Naive thymus-derived CD4-positive, alpha-beta T cell (primary cell): ENCODE measurements at regions of chr5 and their contacts with region 1.

Region 1: DNA sequence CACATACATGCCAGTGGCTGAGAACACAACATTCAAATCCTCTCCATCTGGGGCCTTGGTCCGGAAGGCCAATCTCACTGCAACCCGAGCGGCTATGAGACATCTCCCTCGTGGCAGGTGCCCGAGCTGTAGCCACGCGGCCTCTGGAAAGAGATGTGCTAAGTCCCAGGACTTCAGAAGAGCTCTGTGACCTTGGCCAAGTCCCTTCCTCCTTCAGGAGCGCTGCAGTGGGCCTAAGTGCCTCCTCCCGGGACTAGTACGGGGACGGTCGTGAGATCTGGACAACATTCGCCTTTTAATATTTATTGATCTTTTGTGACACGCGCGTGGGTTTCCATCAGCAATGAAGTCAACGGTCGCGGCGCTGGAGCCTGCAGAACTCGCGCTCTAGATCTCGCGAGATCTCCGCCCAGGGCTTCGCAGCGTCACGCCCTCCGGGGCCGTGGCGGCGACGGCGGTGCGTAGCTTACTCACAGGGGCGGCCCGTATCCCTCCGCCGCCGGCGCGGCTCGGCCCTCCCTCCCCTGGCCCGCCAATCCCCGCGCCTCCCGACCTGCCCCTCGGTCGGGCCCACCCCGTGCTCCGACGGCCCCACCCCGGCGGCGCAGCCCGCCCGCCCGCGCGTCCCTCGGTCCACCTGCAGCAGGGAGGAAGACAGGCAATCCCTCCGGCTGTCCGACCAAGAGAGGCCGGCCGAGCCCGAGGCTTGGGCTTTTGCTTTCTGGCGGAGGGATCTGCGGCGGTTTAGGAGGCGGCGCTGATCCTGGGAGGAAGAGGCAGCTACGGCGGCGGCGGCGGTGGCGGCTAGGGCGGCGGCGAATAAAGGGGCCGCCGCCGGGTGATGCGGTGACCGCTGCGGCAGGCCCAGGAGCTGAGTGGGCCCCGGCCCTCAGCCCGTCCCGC is at the start of gene UBE2D2:
- DNase-seq: peak; percentile 95 to 98 (median 97)
- ATAC-seq: peak; percentile 94
- H3K4me3 ChIP-seq: peak within 1 kb of the TSS; percentile 85
- H3K4me3 Mint-ChIP-seq: peak within 1 kb of the TSS; percentile 90 to 100 (median 98)
- H3K27ac ChIP-seq: peak within 1 kb of the TSS; percentile 92
- H3K27ac Mint-ChIP-seq: peak within 1 kb of the TSS; percentile 88 to 98 (median 95)
- H3K4me1 ChIP-seq: peaks cover 26 to 36% of the 10 kb centered on the region in 2 donors
- H3K4me1 Mint-ChIP-seq: peaks cover 28 to 39% (median 34%) of the 10 kb centered on the region in 7 donors
- H3K27me3 ChIP-seq: no peaks in the 10 kb centered on the region
- H3K27me3 Mint-ChIP-seq: no peaks in the 10 kb centered on the region
- total RNA-seq, gene UBE2D2: 145 to 214 (median 184) TPM

Region 2: GRCh38 chr5:138035605-138036537 is 1525.1 kb before region 1 on chr5:
- CTCF ChIA-PET with region 1: no interaction called
- POLR2A ChIA-PET with region 1: no interaction called
- intact Hi-C with region 1: loop called in 1 of 2 experiments (anchors 10 kb)
- DNase-seq: peak; percentile 11 to 80 (median 72)
- ATAC-seq: peak; percentile 76
- H3K4me3 ChIP-seq: no peak overlapping the region
- H3K4me3 Mint-ChIP-seq: peak overlapping the region in 9 of 10 donors; percentile 0 to 78 (median 25)
- H3K27ac ChIP-seq: no peak overlapping the region
- H3K27ac Mint-ChIP-seq: peak overlapping the region in 8 of 9 donors; percentile 4 to 89 (median 37)
- H3K4me1 ChIP-seq: peaks cover 4 to 24% of the 10 kb centered on the region in 2 donors
- H3K4me1 Mint-ChIP-seq: peaks cover 15 to 30% (median 24%) of the 10 kb centered on the region in 7 donors
- H3K27me3 ChIP-seq: no peaks in the 10 kb centered on the region
- H3K27me3 Mint-ChIP-seq: no peaks in the 10 kb centered on the region

Region 3: GRCh38 chr5:139204196-139204595 is 356.8 kb before region 1 on chr5:
- CTCF ChIA-PET with region 1: no interaction called
- POLR2A ChIA-PET with region 1: no interaction called
- intact Hi-C with region 1: no loop called
- DNase-seq: no peak
- ATAC-seq: no peak
- H3K4me3 ChIP-seq: no peak overlapping the region
- H3K4me3 Mint-ChIP-seq: no peak overlapping the region
- H3K27ac ChIP-seq: no peak overlapping the region
- H3K27ac Mint-ChIP-seq: no peak overlapping the region
- H3K4me1 ChIP-seq: no peaks in the 10 kb centered on the region
- H3K4me1 Mint-ChIP-seq: peaks cover 0 to 4% (median 0%) of the 10 kb centered on the region in 7 donors
- H3K27me3 ChIP-seq: no peaks in the 10 kb centered on the region
- H3K27me3 Mint-ChIP-seq: no peaks in the 10 kb centered on the region

Region 4: DNA sequence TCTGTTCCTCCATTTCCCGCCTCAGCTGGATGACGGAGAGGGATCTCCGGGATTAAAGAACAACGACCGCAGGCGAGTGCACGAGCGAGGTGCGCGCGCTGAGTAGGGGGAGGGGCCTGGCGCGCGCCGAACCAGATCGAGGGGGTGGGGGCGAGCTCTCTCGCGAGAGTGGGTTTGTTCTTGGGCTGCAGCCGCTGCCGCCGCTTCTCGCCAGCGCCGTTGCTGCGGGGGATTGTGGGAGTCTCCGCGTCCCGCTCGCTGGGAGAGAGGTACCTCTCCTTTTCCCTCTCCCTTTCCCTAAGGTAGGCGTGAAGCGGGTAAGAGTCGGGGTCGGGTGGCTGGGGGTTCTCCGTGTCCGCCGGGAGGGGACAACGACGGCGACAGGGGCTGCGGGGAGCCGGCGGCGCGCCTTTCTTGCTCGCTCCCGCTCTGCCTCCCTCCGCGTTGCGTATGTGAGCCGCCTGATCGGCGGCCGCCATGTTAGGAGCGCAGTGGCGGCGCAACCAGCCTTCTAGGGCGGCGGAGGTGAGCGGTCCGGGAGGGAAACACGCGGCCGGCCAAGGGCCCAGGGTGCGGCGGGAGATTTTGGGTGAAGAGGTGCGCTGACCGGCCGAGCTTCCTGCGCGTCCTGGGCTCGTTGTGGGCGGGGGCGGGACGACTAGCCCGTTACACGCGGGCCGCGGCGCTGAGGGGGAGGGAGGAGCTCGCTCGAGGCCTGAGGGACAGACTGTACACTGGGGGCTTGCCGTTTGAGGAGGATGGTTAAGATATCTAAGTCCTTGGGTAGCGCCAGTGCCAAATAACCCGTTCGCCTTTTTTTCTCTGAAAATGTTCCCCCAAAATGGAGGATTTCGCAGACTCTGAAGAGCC is 267.3 kb before region 1 on chr5 and contains the start of gene MATR3:
- CTCF ChIA-PET with region 1: no interaction called
- POLR2A ChIA-PET with region 1: interaction called, 5 read pairs
- intact Hi-C with region 1: loop called (anchors 1 kb)
- DNase-seq: peak; percentile 83 to 94 (median 91)
- ATAC-seq: peak; percentile 95
- H3K4me3 ChIP-seq: peak within 1 kb of the TSS; percentile 87
- H3K4me3 Mint-ChIP-seq: peak within 1 kb of the TSS; percentile 91 to 99 (median 98)
- H3K27ac ChIP-seq: peak within 1 kb of the TSS; percentile 98
- H3K27ac Mint-ChIP-seq: peak within 1 kb of the TSS; percentile 96 to 100 (median 99)
- H3K4me1 ChIP-seq: peaks cover 29 to 37% of the 10 kb centered on the region in 2 donors
- H3K4me1 Mint-ChIP-seq: peaks cover 33 to 51% (median 42%) of the 10 kb centered on the region in 7 donors
- H3K27me3 ChIP-seq: no peaks in the 10 kb centered on the region
- H3K27me3 Mint-ChIP-seq: no peaks in the 10 kb centered on the region
- total RNA-seq, gene MATR3: 219 to 333 (median 274) TPM

Region 5: DNA sequence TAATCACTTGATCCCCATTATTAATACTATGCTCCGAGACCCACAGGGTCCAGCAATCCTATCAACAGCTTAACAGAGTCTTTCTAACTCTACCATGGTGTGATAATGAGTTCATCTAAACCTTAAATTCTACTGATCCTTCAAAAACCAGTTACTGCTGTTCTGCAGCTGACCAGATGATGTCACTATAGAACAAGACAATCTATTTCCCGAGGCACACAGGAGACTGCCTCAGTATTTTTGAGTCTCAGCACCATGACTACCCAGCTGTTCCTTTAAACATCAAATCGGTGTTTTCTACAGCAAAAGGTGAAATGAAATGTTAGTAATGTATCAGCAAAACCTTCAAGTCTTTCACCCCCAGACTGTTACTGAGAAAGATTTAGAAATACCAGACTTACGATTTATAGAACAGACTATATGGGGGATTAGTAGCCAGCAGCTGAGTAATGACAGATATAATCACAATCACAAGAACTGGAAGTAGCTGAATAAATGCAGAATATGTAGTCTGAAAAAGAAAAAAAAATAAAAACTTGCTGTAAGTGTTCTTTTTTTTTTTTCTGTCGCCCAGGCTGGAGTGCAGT is 138.6 kb before region 1 on chr5:
- CTCF ChIA-PET with region 1: no interaction called
- POLR2A ChIA-PET with region 1: no interaction called
- intact Hi-C with region 1: loop called (anchors 2 to 5 kb)
- DNase-seq: peak in 7 of 9 donors; percentile 65 to 86 (median 75)
- ATAC-seq: peak; percentile 99
- H3K4me3 ChIP-seq: no peak overlapping the region
- H3K4me3 Mint-ChIP-seq: peak overlapping the region in 2 of 10 donors; percentile 19 to 47
- H3K27ac ChIP-seq: no peak overlapping the region
- H3K27ac Mint-ChIP-seq: peak overlapping the region in 6 of 9 donors; percentile 16 to 87 (median 74)
- H3K4me1 ChIP-seq: peaks cover 3 to 4% of the 10 kb centered on the region in 2 donors
- H3K4me1 Mint-ChIP-seq: peaks cover 4 to 40% (median 6%) of the 10 kb centered on the region in 7 donors
- H3K27me3 ChIP-seq: no peaks in the 10 kb centered on the region
- H3K27me3 Mint-ChIP-seq: no peaks in the 10 kb centered on the region

Region 6: GRCh38 chr5:139543423-139543991 is 17.5 kb before region 1 on chr5:
- CTCF ChIA-PET with region 1: interaction called, 3 read pairs
- POLR2A ChIA-PET with region 1: interaction called, 9 read pairs
- intact Hi-C with region 1: loop called in 1 of 2 experiments (anchors 1 kb)
- DNase-seq: peak; percentile 23 to 51 (median 47)
- ATAC-seq: peak; percentile 98
- H3K4me3 ChIP-seq: peak overlapping the region; percentile 32
- H3K4me3 Mint-ChIP-seq: peak overlapping the region; percentile 27 to 69 (median 62)
- H3K27ac ChIP-seq: peak overlapping the region; percentile 50
- H3K27ac Mint-ChIP-seq: peak overlapping the region in 7 of 9 donors; percentile 31 to 76 (median 54)
- H3K4me1 ChIP-seq: no peaks in the 10 kb centered on the region
- H3K4me1 Mint-ChIP-seq: peaks cover 1 to 13% (median 8%) of the 10 kb centered on the region in 7 donors
- H3K27me3 ChIP-seq: no peaks in the 10 kb centered on the region
- H3K27me3 Mint-ChIP-seq: no peaks in the 10 kb centered on the region

Region 7: GRCh38 chr5:139711067-139711905 is 150.3 kb after region 1 on chr5:
- CTCF ChIA-PET with region 1: no interaction called
- POLR2A ChIA-PET with region 1: interaction called, 4 read pairs
- intact Hi-C with region 1: loop called in 1 of 2 experiments (anchors 2 kb)
- DNase-seq: peak; percentile 37 to 74 (median 53)
- ATAC-seq: peak; percentile 75
- H3K4me3 ChIP-seq: peak overlapping the region; percentile 58
- H3K4me3 Mint-ChIP-seq: peak overlapping the region; percentile 74 to 85 (median 80)
- H3K27ac ChIP-seq: peak overlapping the region; percentile 63
- H3K27ac Mint-ChIP-seq: peak overlapping the region in 6 of 9 donors; percentile 25 to 87 (median 64)
- H3K4me1 ChIP-seq: peaks cover 14 to 19% of the 10 kb centered on the region in 2 donors
- H3K4me1 Mint-ChIP-seq: peaks cover 10 to 31% (median 23%) of the 10 kb centered on the region in 7 donors
- H3K27me3 ChIP-seq: no peaks in the 10 kb centered on the region
- H3K27me3 Mint-ChIP-seq: peaks cover 0 to 51% (median 0%) of the 10 kb centered on the region in 5 donors